CD4-positive, alpha-beta T cell (primary cell): ENCODE measurements at regions of chr19 and their contacts with region 1.

Region 1: GRCh38 chr19:18469069-18469846 is 31.3 kb upstream of the ISYNA1 start:
- DNase-seq: peak; percentile 42 to 82 (median 56)
- ATAC-seq: peak; percentile 68
- H3K4me3 ChIP-seq: no peak overlapping the region
- H3K4me3 Mint-ChIP-seq: no peak overlapping the region
- H3K27ac ChIP-seq: no peak overlapping the region
- H3K27ac Mint-ChIP-seq: no peak overlapping the region
- H3K4me1 ChIP-seq: peaks cover 53% of the 10 kb centered on the region
- H3K4me1 Mint-ChIP-seq: peaks cover 10% of the 10 kb centered on the region
- H3K27me3 ChIP-seq: no peaks in the 10 kb centered on the region
- H3K27me3 Mint-ChIP-seq: no peaks in the 10 kb centered on the region
- CTCF ChIP-seq: peak; percentile 63

Region 2: DNA sequence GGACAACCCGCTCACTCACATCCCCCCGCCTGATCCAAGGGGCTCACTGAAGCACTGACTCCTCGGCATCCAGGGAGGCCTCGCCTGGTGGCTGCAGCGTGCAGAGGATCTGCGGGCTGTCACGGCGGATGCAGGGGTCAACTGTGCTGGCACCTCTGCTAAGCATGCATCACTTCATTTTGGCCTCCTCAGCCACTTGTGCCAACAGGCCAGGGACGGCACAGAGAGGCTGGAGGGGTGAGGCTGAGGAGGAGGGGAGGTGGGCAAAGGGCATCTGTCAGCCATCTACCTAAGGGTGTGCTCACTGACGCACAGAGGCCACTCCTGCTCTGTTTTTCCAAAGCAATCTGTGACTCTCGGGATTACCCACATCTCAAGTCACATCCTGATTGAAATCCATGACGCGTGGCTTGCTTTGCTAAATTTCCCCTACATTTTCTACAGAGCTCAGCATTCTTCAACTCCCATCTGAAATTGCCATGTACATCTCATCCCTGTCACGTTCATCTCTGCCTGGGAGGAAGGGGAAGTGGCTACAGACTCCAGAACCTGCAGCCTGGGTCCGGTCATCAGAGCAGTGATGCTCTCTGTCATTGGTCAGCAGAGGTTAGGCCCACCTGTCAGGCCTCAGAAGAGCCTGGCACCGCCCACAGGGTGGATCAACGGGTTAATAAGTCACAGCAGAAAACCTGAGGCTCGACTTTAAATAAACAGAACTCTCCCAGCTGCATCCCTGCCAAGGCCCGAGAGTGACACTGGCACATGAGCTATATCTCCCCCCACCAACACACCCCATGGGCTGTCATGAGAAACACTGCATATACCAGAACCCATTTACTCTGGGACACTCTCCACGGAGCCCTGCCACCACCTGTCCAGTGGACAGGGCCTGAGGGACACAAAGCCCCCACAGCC is 35.0 kb after region 1 on chr19:
- CTCF ChIA-PET with region 1: interaction called, 3 read pairs
- POLR2A ChIA-PET with region 1: no interaction called
- intact Hi-C with region 1: loop called in 1 of 2 experiments (anchors 5 kb)
- DNase-seq: no peak
- ATAC-seq: no peak
- H3K4me3 ChIP-seq: no peak overlapping the region
- H3K4me3 Mint-ChIP-seq: no peak overlapping the region
- H3K27ac ChIP-seq: peak overlapping the region in 1 of 2 donors; percentile 30
- H3K27ac Mint-ChIP-seq: peak overlapping the region; percentile 89
- H3K4me1 ChIP-seq: peaks cover 100% of the 10 kb centered on the region
- H3K4me1 Mint-ChIP-seq: peaks cover 82% of the 10 kb centered on the region
- H3K27me3 ChIP-seq: no peaks in the 10 kb centered on the region
- H3K27me3 Mint-ChIP-seq: no peaks in the 10 kb centered on the region
- CTCF ChIP-seq: no peak

Region 3: DNA sequence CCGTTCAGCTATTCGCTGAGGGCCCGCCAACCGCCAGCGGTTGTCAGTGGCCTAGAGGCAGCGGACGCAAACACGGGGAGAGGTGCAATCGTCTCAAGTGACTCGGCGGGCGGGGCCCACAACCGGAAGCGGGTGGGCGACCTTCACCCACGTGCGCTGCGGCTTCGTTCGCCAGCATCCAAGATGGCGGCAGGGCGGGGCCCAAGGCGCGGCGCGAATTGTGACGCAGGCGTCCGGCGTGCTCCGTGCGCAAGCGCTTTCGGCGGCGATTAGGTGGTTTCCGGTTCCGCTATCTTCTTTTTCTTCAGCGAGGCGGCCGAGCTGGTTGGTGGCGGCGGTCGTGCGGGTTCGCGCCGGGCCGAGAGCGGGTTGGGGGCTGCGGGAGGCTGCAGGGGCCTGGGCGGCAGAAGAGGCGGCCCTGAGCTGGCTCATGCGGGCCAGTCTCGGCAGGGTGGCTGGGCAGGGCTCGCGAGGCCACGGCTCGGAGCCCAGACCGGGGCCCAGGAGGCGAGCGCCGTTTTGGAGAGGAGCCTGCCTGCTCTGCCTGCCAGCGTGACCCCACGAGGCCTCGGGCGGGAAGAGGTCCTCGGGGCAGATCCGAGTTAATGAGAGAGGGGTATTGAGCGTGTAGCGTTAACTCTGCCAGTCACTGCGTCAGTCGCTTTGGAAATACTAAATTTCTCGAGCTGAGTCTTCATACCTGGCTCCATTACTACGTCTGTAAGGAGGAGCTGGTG is 102.5 kb after region 1 on chr19 and contains the start of gene UBA52:
- CTCF ChIA-PET with region 1: interaction called, 6 read pairs
- POLR2A ChIA-PET with region 1: interaction called, 3 read pairs
- intact Hi-C with region 1: loop called in 1 of 2 experiments (anchors 5 kb)
- DNase-seq: peak; percentile 96 to 100 (median 98)
- ATAC-seq: peak; percentile 91
- H3K4me3 ChIP-seq: peak within 1 kb of the TSS; percentile 97
- H3K4me3 Mint-ChIP-seq: peak within 1 kb of the TSS; percentile 91
- H3K27ac ChIP-seq: peak within 1 kb of the TSS; percentile 89 to 94
- H3K27ac Mint-ChIP-seq: peak within 1 kb of the TSS; percentile 93
- H3K4me1 ChIP-seq: peaks cover 28% of the 10 kb centered on the region
- H3K4me1 Mint-ChIP-seq: peaks cover 20% of the 10 kb centered on the region
- H3K27me3 ChIP-seq: no peaks in the 10 kb centered on the region
- H3K27me3 Mint-ChIP-seq: no peaks in the 10 kb centered on the region
- CTCF ChIP-seq: no peak
- total RNA-seq, gene UBA52: 2,255 to 2,378 TPM

Region 4: DNA sequence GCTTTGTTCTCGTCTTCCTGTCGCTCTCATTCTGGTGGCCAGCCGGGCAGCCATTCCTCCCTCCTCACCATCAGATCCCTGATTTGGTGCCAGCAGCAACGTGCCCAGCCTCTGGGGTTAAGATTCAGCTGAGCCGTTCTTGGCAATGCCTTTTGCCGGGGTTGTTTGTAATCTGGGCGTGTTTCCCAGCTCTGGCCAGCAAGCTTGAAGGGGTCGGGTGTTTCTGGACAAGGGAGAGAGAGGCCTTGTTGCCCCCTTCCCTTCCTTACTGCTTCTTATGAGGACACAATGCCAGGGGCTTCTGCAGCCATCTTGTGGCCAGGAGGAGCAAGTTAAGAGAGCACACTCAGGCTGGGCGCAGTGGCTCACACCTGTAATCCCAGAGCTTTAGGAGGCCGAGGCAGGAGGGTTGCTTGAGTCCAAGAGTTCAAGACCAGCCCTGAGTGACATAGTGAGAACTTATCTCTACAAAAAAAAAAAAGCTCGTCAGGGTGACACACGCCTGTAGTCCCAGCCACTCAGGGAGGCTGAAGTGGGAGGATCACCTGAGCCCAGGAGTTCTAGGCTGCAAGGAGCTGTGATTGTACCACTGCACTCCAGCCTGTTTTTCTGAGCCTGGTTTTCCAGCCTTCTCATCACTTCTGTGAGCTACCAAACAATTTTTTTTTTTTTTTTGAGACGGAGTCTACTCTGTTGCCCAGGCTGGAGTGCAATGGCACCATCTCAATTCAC is 203.5 kb after region 1 on chr19:
- CTCF ChIA-PET with region 1: no interaction called
- POLR2A ChIA-PET with region 1: no interaction called
- intact Hi-C with region 1: loop called in 1 of 2 experiments (anchors 5 kb)
- DNase-seq: no peak
- ATAC-seq: no peak
- H3K4me3 ChIP-seq: no peak overlapping the region
- H3K4me3 Mint-ChIP-seq: no peak overlapping the region
- H3K27ac ChIP-seq: no peak overlapping the region
- H3K27ac Mint-ChIP-seq: no peak overlapping the region
- H3K4me1 ChIP-seq: no peaks in the 10 kb centered on the region
- H3K4me1 Mint-ChIP-seq: no peaks in the 10 kb centered on the region
- H3K27me3 ChIP-seq: no peaks in the 10 kb centered on the region
- H3K27me3 Mint-ChIP-seq: no peaks in the 10 kb centered on the region
- CTCF ChIP-seq: no peak

Region 5: GRCh38 chr19:18846862-18847548 is 377.7 kb after region 1 on chr19:
- CTCF ChIA-PET with region 1: no interaction called
- POLR2A ChIA-PET with region 1: no interaction called
- intact Hi-C with region 1: loop called (anchors 5 kb)
- DNase-seq: peak; percentile 45 to 82 (median 63)
- ATAC-seq: peak; percentile 71
- H3K4me3 ChIP-seq: no peak overlapping the region
- H3K4me3 Mint-ChIP-seq: peak overlapping the region; percentile 74
- H3K27ac ChIP-seq: no peak overlapping the region
- H3K27ac Mint-ChIP-seq: peak overlapping the region; percentile 68
- H3K4me1 ChIP-seq: peaks cover 75% of the 10 kb centered on the region
- H3K4me1 Mint-ChIP-seq: peaks cover 59% of the 10 kb centered on the region
- H3K27me3 ChIP-seq: no peaks in the 10 kb centered on the region
- H3K27me3 Mint-ChIP-seq: no peaks in the 10 kb centered on the region
- CTCF ChIP-seq: peak; percentile 69

Region 6: GRCh38 chr19:18865973-18866799 is 396.9 kb after region 1 on chr19:
- CTCF ChIA-PET with region 1: no interaction called
- POLR2A ChIA-PET with region 1: no interaction called
- intact Hi-C with region 1: loop called in 1 of 2 experiments (anchors 5 kb)
- DNase-seq: peak in 13 of 14 experiments; percentile 41 to 83 (median 56)
- ATAC-seq: peak; percentile 83
- H3K4me3 ChIP-seq: no peak overlapping the region
- H3K4me3 Mint-ChIP-seq: no peak overlapping the region
- H3K27ac ChIP-seq: no peak overlapping the region
- H3K27ac Mint-ChIP-seq: no peak overlapping the region
- H3K4me1 ChIP-seq: peaks cover 17% of the 10 kb centered on the region
- H3K4me1 Mint-ChIP-seq: peaks cover 9% of the 10 kb centered on the region
- H3K27me3 ChIP-seq: peaks cover 5 to 7% of the 10 kb centered on the region in 2 experiments
- H3K27me3 Mint-ChIP-seq: peaks cover 5% of the 10 kb centered on the region
- CTCF ChIP-seq: peak; percentile 94